Activated naive CD4-positive, alpha-beta T cell treated with anti-CD3 and anti-CD28 coated beads for 36 hours (primary cell): ENCODE measurements at regions of chr5 and their contacts with region 1.

Region 1: GRCh38 chr5:14914603-14915277 is 43.2 kb upstream of the ANKH start:
- DNase-seq: no peak
- H3K4me3 Mint-ChIP-seq: no peak overlapping the region
- H3K27ac Mint-ChIP-seq: peak overlapping the region; percentile 43
- H3K4me1 Mint-ChIP-seq: peaks cover 17% of the 10 kb centered on the region
- H3K27me3 Mint-ChIP-seq: no peaks in the 10 kb centered on the region

Region 2: GRCh38 chr5:14925326-14925725 is 10.6 kb after region 1 on chr5:
- CTCF ChIA-PET with region 1: no interaction called
- intact Hi-C with region 1: loop called (anchors 1 kb)
- DNase-seq: no peak
- H3K4me3 Mint-ChIP-seq: peak overlapping the region; percentile 40
- H3K27ac Mint-ChIP-seq: peak overlapping the region; percentile 86
- H3K4me1 Mint-ChIP-seq: peaks cover 58% of the 10 kb centered on the region
- H3K27me3 Mint-ChIP-seq: no peaks in the 10 kb centered on the region